ENCODE measurements at regions of chr10 and their contacts with region 1.

Region 1: DNA sequence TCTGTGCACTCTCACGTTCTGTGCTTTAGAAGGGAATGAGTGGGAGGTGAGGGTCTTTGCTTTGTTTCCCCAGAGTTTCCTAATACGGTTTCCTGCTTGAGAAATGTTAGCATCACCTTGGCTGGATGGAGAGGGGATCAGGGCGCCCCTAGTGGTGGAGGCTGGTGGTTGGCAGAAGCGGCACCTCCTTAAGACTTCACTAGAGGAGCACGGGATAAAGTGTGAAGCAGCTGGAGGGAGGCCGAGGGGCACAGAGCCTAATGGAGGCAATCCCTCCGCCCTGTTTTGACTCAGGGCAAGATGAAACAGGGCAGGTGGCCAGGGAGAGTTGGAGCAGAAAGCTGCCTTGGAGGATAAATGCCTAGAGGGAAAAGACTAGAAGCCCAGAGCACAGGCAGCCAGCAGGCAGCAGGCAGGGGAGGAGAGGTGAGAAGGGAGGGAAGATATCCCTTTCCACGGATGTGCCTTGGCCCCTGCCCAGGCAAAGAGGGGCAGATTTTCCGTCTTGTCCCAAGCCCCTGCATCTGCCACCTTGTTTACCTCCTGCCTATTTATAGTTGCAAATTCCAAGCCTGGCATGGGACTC is 56.0 kb upstream of the BTRC start:
- DNase-seq: peak in 4 of 5 donors; percentile 25 to 75 (median 33)
- ATAC-seq: peak in 3 of 4 donors; percentile 25 to 48 (median 37)
- H3K4me3 ChIP-seq: no peak overlapping the region
- H3K27ac ChIP-seq: no peak overlapping the region
- H3K4me1 ChIP-seq: peaks cover 0 to 11% (median 0%) of the 10 kb centered on the region in 12 donors
- H3K27me3 ChIP-seq: peaks cover 0 to 38% (median 3%) of the 10 kb centered on the region in 9 donors
- CTCF ChIP-seq: peak; percentile 66 to 89 (median 76)
- POLR2A ChIP-seq: no peak

Region 2: DNA sequence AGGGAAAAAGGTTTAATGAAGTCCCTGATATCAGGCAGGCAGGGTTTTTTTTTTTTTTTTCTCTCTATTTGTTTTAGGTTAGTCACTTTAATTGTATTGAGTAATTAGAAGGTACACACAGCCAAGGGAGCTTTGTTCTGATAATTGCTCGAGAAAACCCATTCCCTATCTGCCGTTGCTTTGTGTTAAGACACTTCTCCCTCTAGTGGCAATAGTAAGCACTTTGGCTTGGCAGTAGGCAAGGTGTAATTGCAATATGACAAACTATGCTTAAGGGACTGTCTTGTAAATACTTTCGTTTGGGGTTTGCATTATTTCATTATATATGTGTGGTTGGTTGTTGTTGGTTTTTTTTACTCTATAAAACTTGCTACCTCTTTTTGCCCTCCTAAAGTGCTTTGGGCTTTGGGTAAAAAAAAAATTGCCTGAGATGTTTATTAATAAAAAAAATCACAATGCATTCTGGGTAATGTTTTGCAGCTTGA is 169.3 kb after region 1 on chr10:
- intact Hi-C with region 1: loop called in 2 of 10 experiments (anchors 2 to 5 kb)
- DNase-seq: peak in 2 of 5 donors; percentile 23 to 27
- ATAC-seq: peak; percentile 56 to 88 (median 82)
- H3K4me3 ChIP-seq: no peak overlapping the region
- H3K27ac ChIP-seq: no peak overlapping the region
- H3K4me1 ChIP-seq: peaks cover 0 to 34% (median 10%) of the 10 kb centered on the region in 12 donors
- H3K27me3 ChIP-seq: no peaks in the 10 kb centered on the region
- CTCF ChIP-seq: peak; percentile 66 to 92 (median 76)
- POLR2A ChIP-seq: no peak